Left colon (tissue), 2 donors: ENCODE measurements at regions of chr14 and their contacts with region 1.

Region 1: DNA sequence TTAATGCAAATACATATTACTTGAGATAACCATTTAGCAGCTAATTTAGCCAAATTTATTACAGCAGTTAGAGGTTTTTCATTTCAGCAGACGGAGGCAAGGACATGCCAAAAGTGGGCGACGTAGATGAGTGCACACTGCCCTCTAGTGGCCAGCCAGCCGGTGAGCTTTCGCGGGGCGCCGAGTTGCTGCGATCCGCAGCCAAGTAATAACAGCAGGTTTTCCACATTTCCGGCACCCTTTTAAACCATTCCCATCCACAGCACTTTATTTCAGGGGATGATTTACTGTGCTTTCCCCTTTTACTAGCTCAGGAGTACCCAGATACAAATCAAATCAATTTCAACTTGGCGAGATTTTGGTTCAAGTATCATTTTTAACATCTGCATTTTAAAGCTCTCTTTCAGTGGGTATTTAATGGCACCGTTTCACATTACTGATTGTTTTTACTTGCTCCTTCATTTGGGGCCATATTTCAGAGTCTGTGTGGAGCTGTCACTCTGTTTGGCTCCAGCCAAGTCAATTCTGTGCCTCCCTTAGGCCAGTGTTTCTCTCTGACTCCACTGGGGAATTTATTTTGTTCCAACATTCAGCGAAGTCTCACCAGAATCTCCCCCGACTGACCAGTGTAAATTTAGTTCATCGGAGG is 158.0 kb downstream of the EGLN3 start:
- DNase-seq: peak; percentile 59 to 86
- ATAC-seq: peak; percentile 84

Region 2: GRCh38 chr14:32576088-32576795 is 1216.6 kb before region 1 on chr14:
- intact Hi-C with region 1: loop called in 1 of 2 experiments (anchors 5 kb)
- DNase-seq: peak in 1 of 2 donors; percentile 27
- ATAC-seq: peak; percentile 59